ENCODE measurements at regions of chr3 and their contacts with region 1.

Region 1: DNA sequence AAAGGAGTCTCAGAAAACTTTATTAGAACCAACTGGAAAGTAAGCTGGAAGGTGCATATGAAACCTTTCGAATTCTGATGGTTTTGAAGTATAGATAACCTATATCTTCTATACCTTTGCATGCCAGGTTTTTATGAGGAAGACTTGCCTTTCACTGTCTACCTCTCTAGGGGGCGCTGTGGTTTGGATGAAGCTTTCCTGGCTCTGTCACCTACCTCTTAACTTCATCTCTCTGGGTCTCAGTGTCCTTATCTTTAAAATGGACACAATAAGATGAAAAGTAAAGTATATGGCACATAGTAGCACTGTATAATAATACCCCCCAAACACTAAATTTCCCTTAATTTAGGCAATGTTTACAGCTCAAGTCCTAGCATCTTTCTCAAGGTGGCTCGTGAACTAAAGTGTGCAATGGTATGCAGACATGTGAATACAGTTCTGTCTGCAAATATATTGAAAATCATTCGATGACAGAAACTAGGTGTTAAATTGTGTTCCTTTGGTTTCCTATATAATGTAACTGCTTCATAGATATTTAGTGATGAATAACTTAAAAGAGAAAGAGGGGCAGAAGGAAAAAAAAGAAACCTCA is 314.3 kb downstream of the CHST2 start:
- DNase-seq: peak; percentile 42
- H3K4me3 ChIP-seq: no peak overlapping the region
- H3K27ac ChIP-seq: no peak overlapping the region
- H3K4me1 ChIP-seq: peaks cover 3% of the 10 kb centered on the region
- H3K27me3 ChIP-seq: no peaks in the 10 kb centered on the region
- CTCF ChIP-seq: peak; percentile 24

Region 2: GRCh38 chr3:143331350-143331749 is 102.5 kb before region 1 on chr3:
- intact Hi-C with region 1: no loop called
- DNase-seq: no peak
- H3K4me3 ChIP-seq: no peak overlapping the region
- H3K27ac ChIP-seq: no peak overlapping the region
- H3K4me1 ChIP-seq: no peaks in the 10 kb centered on the region
- H3K27me3 ChIP-seq: no peaks in the 10 kb centered on the region
- CTCF ChIP-seq: no peak

Region 3: DNA sequence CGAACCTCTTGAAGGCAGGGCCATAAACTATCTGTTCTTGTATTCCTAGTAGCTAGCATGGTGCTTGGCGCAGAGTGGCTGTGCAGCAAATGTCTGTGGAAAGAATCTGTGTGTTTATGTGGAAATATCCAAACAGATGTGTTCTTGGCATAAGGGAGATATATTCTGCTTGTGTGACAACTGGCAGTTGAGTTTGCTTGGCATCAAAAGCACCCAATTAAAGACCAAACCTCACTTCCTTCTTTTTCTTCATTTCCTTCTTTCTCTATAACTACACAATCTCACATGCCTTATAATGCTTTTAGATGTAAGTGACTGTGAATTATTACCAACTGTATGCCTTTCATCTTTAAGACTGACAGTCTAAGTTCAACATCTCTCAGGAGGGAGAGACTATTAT is 117.9 kb after region 1 on chr3:
- intact Hi-C with region 1: no loop called
- DNase-seq: no peak
- H3K4me3 ChIP-seq: no peak overlapping the region
- H3K27ac ChIP-seq: no peak overlapping the region
- H3K4me1 ChIP-seq: no peaks in the 10 kb centered on the region
- H3K27me3 ChIP-seq: no peaks in the 10 kb centered on the region
- CTCF ChIP-seq: no peak

Region 4: DNA sequence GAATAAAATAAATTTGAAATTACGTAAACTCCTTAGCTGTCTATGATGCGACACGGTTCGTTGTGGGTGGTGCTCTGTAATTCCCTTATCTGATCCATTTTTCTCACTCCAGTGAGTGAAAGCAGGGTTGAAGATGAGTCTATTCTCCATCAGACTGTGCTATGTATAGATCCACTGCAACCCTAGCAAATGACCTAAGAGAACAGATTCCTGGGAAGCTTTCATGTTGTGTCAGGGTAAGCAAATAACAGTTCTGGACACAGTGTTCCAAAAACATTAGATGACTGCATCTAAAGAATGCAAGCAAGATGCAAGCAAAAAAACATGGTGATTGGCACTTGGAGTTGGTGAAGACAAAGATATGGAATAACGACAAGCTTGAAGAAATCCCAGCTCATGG is 175.1 kb after region 1 on chr3:
- intact Hi-C with region 1: no loop called
- DNase-seq: no peak
- H3K4me3 ChIP-seq: no peak overlapping the region
- H3K27ac ChIP-seq: no peak overlapping the region
- H3K4me1 ChIP-seq: no peaks in the 10 kb centered on the region
- H3K27me3 ChIP-seq: no peaks in the 10 kb centered on the region
- CTCF ChIP-seq: no peak

Region 5: DNA sequence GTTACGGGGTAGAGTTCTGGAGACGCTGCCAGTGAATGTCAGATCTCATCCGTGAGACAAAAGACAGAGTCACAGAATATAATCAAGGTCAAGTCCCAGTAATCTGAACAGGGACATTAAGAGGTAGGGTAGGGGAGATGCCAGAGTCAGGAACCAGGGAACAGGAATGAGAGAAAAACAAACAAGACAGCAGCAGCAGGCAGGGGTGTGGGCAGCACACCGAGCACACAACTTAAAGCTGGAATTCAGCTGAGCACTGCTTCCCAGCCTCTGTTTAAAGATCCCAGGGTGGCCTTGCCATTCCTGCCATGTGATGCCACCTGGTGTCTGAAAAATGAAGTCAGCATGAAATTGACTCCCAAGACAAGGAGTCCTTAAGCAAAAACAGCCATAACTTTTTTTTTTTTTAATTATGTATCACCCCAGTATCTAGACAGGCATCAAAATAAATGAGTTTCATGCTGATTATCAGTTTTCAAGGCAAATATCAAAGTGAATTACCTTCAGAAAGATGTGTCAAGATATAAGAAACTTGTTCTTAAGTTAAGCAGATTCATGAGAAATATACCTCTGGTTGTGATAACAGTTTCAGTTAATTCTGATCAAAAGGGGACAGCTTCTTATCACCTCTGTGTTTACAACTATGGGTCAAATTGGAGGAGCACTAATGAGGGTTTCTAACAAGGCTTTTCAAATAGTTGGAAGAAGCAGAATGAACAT is 210.6 kb after region 1 on chr3:
- intact Hi-C with region 1: loop called (anchors 10 kb)
- DNase-seq: peak; percentile 80
- H3K4me3 ChIP-seq: no peak overlapping the region
- H3K27ac ChIP-seq: no peak overlapping the region
- H3K4me1 ChIP-seq: no peaks in the 10 kb centered on the region
- H3K27me3 ChIP-seq: no peaks in the 10 kb centered on the region
- CTCF ChIP-seq: peak; percentile 55

Measured in colonic mucosa (tissue), 4 donors.